ENCODE measurements at regions of chr3 and their contacts with region 1.

Region 1: DNA sequence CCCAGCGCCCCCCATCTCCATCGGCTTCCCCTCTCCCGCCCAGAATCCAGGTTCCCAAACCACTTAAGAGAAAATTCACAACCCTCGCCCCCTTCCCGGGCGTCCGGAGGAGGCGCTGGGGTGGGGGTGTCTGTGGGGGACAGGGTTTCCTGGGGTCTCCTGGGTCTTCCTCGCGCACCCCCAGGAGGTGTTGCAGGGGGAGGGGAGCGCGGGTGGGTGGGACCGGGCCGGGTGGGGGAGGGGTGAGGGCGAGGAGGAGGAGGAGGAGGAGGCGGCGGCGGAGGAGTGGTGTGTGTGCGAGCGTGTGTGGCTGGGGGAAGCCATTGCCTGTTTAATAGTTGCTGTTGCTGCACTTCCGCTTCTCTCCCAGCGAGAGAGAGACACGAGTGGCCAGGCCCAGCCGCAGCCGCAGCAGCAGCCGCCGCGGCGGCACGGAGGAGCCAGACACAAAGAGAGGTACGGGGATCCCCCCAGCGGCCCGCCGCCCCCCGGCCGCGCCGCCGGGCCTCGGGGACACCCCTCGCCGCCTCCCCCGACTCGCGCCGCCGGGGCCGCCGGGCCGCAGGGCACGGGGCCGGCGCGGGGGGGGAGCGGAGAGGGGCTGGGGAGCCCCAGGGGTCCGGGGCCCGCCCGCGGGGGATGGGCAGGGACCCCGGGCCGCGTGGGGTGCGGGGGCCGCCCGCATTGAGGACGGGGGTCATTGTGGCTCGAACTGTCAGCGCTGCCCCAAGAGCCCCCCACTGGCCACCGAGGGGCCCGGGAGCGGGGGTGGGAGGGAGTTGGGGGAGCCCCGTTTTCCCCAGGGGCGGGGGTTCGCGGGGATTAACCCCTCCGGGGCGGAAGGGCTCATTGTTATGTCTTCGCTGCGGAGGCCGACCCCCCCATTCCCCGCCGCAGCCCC is at the start of gene UBE2E1:
- DNase-seq: no peak
- H3K4me3 ChIP-seq: peak within 1 kb of the TSS; percentile 69 to 98
- H3K27ac ChIP-seq: peak within 1 kb of the TSS; percentile 92
- H3K4me1 ChIP-seq: peaks cover 46% of the 10 kb centered on the region
- H3K27me3 ChIP-seq: no peaks in the 10 kb centered on the region
- CTCF ChIP-seq: no peak
- POLR2A ChIP-seq: peak in 1 of 2 donors; percentile 33
- total RNA-seq, gene UBE2E1: 124 TPM

Region 2: DNA sequence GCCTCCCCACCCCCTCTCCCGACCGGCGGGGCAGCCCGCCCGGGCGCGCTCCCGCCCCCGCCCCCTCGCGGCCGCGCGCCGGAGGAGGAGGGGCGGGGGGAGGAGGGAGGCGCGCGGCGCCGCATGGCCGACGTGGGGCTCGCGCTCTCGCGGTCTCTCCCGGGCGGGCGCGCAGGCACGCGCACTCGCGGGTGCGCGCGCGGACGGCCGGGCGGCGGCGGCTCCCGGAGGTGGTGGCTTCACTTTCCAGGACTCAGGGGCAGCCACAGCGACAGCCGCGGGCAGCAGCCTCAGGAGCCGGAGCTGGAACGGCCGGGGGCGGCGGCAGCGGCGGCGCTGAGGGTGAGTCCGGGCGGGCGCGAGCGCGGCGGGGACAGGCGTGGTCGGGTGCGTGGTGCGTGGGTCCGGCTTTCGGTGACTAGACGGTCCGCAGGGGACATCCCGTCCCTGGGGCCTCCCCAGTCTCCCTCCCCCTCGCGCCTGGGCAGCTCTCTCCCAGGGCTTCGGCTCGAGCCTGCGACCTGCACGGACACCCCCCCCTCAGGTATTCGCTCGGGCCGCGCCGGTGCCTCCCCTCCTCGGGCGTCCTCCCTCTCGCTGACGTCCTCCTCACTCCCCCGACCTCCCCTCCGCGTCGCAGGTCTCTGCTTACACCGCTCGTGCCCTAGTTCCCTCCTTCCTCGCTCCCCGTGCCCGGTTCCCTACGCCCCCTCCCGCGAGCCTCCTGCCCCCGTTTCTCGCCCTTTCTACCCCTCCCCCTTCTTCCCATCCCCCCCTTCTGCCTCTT is 602.8 kb before region 1 on chr3 and contains the start of gene UBE2E2:
- intact Hi-C with region 1: loop called (anchors 10 kb)
- DNase-seq: no peak
- H3K4me3 ChIP-seq: peak within 1 kb of the TSS; percentile 85 to 95
- H3K27ac ChIP-seq: peak within 1 kb of the TSS; percentile 88
- H3K4me1 ChIP-seq: peaks cover 15% of the 10 kb centered on the region
- H3K27me3 ChIP-seq: no peaks in the 10 kb centered on the region
- CTCF ChIP-seq: no peak
- POLR2A ChIP-seq: peak in 1 of 2 donors; percentile 86
- total RNA-seq, gene UBE2E2: 31.2 TPM

Region 3: GRCh38 chr3:23748398-23749110 is 57.3 kb before region 1 on chr3:
- intact Hi-C with region 1: loop called (anchors 2 kb)
- DNase-seq: no peak
- H3K4me3 ChIP-seq: no peak overlapping the region
- H3K27ac ChIP-seq: no peak overlapping the region
- H3K4me1 ChIP-seq: peaks cover 10% of the 10 kb centered on the region
- H3K27me3 ChIP-seq: no peaks in the 10 kb centered on the region
- CTCF ChIP-seq: no peak
- POLR2A ChIP-seq: no peak

Region 4: DNA sequence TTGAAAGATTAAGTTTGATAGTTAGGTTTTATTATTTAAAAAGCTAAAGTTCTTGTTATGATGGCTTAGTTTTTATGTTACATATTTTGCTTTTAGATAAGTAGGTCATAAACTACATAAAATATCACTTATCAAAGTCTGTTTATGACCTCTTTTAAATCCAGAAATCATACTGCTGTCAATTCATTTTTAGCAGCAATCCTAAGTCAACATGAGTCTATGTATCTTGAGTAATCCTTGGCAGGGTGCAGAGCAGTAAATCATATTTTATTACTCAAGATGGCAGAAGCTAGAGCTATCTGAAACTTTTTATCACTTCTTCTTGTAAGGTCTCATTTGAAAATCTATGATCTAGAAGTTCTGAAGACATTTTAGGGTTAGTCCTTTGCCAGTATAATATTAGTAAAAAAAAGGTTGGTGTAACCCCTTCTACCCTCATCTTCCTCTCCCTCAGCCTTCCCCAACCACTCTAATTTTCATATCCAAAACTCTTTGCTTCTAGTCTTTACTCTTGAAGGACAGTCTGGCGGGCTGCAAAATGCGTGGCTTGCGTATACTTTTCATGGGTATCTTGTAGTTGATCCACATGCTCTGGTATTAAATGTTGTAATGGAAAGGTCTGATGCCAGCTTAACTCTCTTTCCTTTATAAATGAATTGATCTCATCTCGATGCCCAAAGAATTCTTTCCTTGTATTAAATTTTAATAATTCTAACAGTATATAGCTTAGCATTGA is 822.8 kb after region 1 on chr3:
- intact Hi-C with region 1: no loop called
- DNase-seq: no peak
- H3K4me3 ChIP-seq: no peak overlapping the region
- H3K27ac ChIP-seq: no peak overlapping the region
- H3K4me1 ChIP-seq: no peaks in the 10 kb centered on the region
- H3K27me3 ChIP-seq: no peaks in the 10 kb centered on the region
- CTCF ChIP-seq: no peak
- POLR2A ChIP-seq: no peak